Activated CD4-positive, alpha-beta T cell treated with anti-CD3 and anti-CD28 coated beads for 36 hours (primary cell): ENCODE measurements at regions of chr12 and their contacts with region 1.

Region 1: GRCh38 chr12:110468212-110469048 is at the starts of genes FAM216A and GPN3:
- DNase-seq: peak; percentile 97
- ATAC-seq: peak; percentile 78
- H3K4me3 Mint-ChIP-seq: peak within 1 kb of the TSS; percentile 89
- H3K27ac Mint-ChIP-seq: peak within 1 kb of the TSS; percentile 98
- H3K4me1 Mint-ChIP-seq: peaks cover 33% of the 10 kb centered on the region
- H3K27me3 Mint-ChIP-seq: no peaks in the 10 kb centered on the region
- total RNA-seq, gene FAM216A: 55.2 to 57.5 TPM
- total RNA-seq, gene GPN3: 37.8 to 62.0 TPM

Region 2: GRCh38 chr12:109880016-109880931 is 588.2 kb before region 1 on chr12 and contains the start of gene GLTP:
- CTCF ChIA-PET with region 1: no interaction called
- POLR2A ChIA-PET with region 1: no interaction called
- intact Hi-C with region 1: loop called in 1 of 2 experiments (anchors 1 kb)
- DNase-seq: peak; percentile 93
- ATAC-seq: peak; percentile 97
- H3K4me3 Mint-ChIP-seq: peak within 1 kb of the TSS; percentile 86
- H3K27ac Mint-ChIP-seq: peak within 1 kb of the TSS; percentile 88
- H3K4me1 Mint-ChIP-seq: peaks cover 36% of the 10 kb centered on the region
- H3K27me3 Mint-ChIP-seq: no peaks in the 10 kb centered on the region
- total RNA-seq, gene GLTP: 24.2 to 26.9 TPM

Region 3: GRCh38 chr12:110403146-110403975 is 65.1 kb before region 1 on chr12 and contains the start of gene ANAPC7:
- CTCF ChIA-PET with region 1: no interaction called
- POLR2A ChIA-PET with region 1: no interaction called
- intact Hi-C with region 1: loop called in 1 of 2 experiments (anchors 1 kb)
- DNase-seq: peak; percentile 93
- ATAC-seq: peak; percentile 94
- H3K4me3 Mint-ChIP-seq: peak within 1 kb of the TSS; percentile 88
- H3K27ac Mint-ChIP-seq: peak within 1 kb of the TSS; percentile 99
- H3K4me1 Mint-ChIP-seq: peaks cover 21% of the 10 kb centered on the region
- H3K27me3 Mint-ChIP-seq: no peaks in the 10 kb centered on the region
- total RNA-seq, gene ANAPC7: 52.6 to 63.6 TPM

Region 4: DNA sequence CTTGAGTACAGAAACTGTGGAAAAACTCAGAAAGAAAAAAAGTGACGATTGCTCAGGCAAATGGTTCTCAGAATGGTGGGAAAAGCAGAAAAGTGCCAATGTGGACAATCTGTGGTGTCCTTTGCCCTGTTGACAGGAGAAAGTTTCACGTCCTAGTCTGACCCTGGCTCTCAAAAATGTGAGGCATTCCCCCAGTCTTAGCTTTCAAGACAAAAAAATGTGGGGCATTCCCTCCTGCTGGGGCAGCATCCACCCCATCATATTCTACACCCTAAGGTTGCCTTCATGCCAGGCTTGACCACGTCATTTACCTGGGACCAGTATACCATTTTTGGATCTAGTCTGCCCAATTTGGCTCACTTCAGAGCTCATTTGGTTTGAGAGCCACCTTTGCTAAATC is 44.2 kb before region 1 on chr12:
- CTCF ChIA-PET with region 1: no interaction called
- POLR2A ChIA-PET with region 1: no interaction called
- intact Hi-C with region 1: no loop called
- DNase-seq: no peak
- ATAC-seq: no peak
- H3K4me3 Mint-ChIP-seq: no peak overlapping the region
- H3K27ac Mint-ChIP-seq: no peak overlapping the region
- H3K4me1 Mint-ChIP-seq: no peaks in the 10 kb centered on the region
- H3K27me3 Mint-ChIP-seq: no peaks in the 10 kb centered on the region

Region 5: GRCh38 chr12:110501752-110502738 is 33.6 kb after region 1 on chr12 and contains the starts of genes RAD9B and VPS29:
- CTCF ChIA-PET with region 1: interaction called, 33 read pairs
- POLR2A ChIA-PET with region 1: interaction called, 26 read pairs
- intact Hi-C with region 1: loop called (anchors 1 kb)
- DNase-seq: peak; percentile 100
- ATAC-seq: peak; percentile 97
- H3K4me3 Mint-ChIP-seq: peak within 1 kb of the TSS; percentile 95
- H3K27ac Mint-ChIP-seq: peak within 1 kb of the TSS; percentile 94
- H3K4me1 Mint-ChIP-seq: peaks cover 28% of the 10 kb centered on the region
- H3K27me3 Mint-ChIP-seq: no peaks in the 10 kb centered on the region
- total RNA-seq, gene RAD9B: 1.5 to 2.2 TPM
- total RNA-seq, gene VPS29: 84.4 to 103 TPM

Region 6: DNA sequence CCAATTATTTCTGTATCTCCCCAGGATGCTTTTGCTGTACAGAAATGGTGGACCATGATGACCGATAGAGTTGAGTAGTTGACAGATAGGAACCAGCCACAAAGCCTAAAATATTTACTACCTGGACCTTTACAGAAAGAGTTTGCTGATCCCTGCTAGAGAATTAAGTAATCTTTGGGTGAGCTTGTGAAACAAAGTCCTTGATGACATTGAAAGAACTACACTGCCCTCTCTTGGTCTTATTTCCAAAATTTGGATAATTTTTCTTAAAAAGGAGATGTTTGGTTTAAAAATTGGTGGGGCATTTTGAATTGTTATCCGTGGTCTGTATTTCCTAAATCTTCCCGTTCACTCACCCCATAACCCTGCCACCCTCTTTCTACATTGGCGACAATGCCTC is 131.8 kb after region 1 on chr12:
- CTCF ChIA-PET with region 1: interaction called, 37 read pairs
- POLR2A ChIA-PET with region 1: interaction called, 4 read pairs
- intact Hi-C with region 1: loop called (anchors 1 to 2 kb)
- DNase-seq: no peak
- ATAC-seq: peak; percentile 35
- H3K4me3 Mint-ChIP-seq: no peak overlapping the region
- H3K27ac Mint-ChIP-seq: peak overlapping the region; percentile 13
- H3K4me1 Mint-ChIP-seq: peaks cover 9% of the 10 kb centered on the region
- H3K27me3 Mint-ChIP-seq: no peaks in the 10 kb centered on the region

Region 7: DNA sequence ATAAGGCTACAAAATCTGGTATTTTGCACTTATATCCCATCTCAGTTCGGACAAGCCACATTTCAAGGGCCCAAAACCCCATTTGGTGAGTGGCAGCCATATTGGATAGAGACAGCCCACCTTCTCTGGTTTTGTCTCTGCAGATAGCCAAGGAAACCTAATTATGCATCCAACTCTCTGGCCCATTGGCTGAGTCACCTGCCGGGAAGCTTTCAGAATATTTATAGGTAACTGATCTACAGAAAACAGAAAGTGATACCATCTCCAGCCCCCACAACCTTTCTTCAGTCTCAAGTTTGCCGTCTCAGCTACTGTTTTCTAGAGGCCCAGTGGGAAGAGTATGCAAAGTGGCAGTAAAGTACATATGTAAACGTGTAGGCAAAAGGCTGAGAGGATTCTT is 308.0 kb after region 1 on chr12:
- CTCF ChIA-PET with region 1: interaction called, 3 read pairs
- POLR2A ChIA-PET with region 1: no interaction called
- intact Hi-C with region 1: loop called in 1 of 2 experiments (anchors 1 kb)
- DNase-seq: peak; percentile 81
- ATAC-seq: peak; percentile 84
- H3K4me3 Mint-ChIP-seq: peak overlapping the region; percentile 9
- H3K27ac Mint-ChIP-seq: peak overlapping the region; percentile 98
- H3K4me1 Mint-ChIP-seq: peaks cover 74% of the 10 kb centered on the region
- H3K27me3 Mint-ChIP-seq: no peaks in the 10 kb centered on the region

Region 8: DNA sequence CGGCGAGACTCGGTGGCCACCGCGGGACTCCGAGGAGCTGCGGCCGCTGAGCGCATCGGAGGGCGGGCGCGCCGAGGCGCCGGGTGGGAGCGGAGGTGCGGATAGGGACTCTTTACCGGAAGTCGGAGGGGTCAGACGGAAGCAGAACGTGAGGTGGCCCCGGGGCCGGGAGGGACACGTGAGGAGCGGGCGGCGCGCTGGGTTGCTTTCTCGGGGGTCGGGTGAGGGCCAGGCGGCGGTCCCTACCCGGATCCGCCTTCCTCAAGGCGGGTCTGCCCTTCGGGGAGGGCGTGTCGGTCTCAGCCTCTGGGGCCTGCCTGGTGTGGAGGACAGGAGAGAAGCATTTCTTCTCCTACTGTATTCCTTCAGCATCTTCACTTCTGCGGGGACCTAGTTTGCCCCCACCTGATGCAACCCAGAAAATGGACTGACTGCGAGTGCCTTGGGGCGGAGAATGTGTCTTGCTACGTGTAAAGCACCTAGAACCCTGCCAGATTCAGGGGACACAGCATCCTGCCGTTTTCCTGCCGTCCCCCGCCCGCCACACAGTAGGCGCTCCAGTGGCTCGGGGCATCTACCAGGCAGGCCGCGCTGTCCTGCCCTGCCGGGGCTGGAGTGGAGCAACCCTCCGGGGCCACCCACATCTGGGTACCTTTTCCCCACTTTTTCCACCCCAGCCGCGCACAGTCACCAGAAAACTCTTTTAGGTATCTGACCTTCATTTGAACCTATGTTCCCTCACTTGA is 1131.2 kb after region 1 on chr12:
- CTCF ChIA-PET with region 1: no interaction called
- POLR2A ChIA-PET with region 1: no interaction called
- intact Hi-C with region 1: loop called in 1 of 2 experiments (anchors 1 kb)
- DNase-seq: peak; percentile 91
- ATAC-seq: peak; percentile 83
- H3K4me3 Mint-ChIP-seq: peak overlapping the region; percentile 81
- H3K27ac Mint-ChIP-seq: peak overlapping the region; percentile 92
- H3K4me1 Mint-ChIP-seq: peaks cover 17% of the 10 kb centered on the region
- H3K27me3 Mint-ChIP-seq: no peaks in the 10 kb centered on the region